Mammary epithelial cell (primary cell): ENCODE measurements at regions of chr6 and their contacts with region 1.

Region 1: DNA sequence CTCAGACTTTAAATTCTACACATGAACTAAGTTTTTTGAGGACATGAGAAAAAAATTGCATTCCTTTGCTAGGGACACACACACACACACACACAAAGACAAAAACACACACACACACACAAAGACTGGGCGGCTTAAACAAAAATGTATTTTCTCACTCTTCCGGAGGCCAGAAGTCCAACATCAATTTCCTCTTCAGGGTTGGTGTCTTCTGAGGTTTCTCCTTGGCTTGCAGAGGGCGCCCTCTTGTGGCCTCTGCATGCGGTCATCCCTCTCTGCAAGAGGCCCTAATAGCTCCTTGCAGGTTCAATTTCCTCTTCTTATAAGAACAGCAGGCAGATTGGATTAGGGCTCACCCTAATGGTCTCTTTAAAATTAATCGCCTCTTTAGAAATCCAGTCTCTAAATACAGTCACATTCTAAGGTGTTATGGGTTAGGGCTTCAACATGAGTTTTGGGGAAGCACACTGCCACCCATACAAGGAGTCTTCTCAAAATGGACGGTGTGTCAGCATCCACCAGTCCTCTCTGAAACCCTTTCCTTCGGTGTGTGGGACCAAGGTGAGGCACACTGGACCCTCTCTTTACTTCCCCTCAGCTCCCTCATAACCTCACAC is 61.4 kb downstream of the GPR6 start:
- DNase-seq: peak; percentile 74
- H3K4me3 ChIP-seq: no peak overlapping the region
- H3K27ac ChIP-seq: no peak overlapping the region
- H3K4me1 ChIP-seq: peaks cover 3% of the 10 kb centered on the region
- H3K27me3 ChIP-seq: no peaks in the 10 kb centered on the region
- CTCF ChIP-seq: peak; percentile 88 to 97

Region 2: GRCh38 chr6:109595998-109596397 is 443.5 kb before region 1 on chr6:
- CTCF ChIA-PET with region 1: interaction called, 8 read pairs
- dilution Hi-C with region 1: no loop called
- in situ Hi-C with region 1: no loop called
- intact Hi-C with region 1: loop called (anchors 1 kb)
- DNase-seq: peak; percentile 12
- H3K4me3 ChIP-seq: no peak overlapping the region
- H3K27ac ChIP-seq: no peak overlapping the region
- H3K4me1 ChIP-seq: no peaks in the 10 kb centered on the region
- H3K27me3 ChIP-seq: no peaks in the 10 kb centered on the region
- CTCF ChIP-seq: peak; percentile 30 to 74

Region 3: DNA sequence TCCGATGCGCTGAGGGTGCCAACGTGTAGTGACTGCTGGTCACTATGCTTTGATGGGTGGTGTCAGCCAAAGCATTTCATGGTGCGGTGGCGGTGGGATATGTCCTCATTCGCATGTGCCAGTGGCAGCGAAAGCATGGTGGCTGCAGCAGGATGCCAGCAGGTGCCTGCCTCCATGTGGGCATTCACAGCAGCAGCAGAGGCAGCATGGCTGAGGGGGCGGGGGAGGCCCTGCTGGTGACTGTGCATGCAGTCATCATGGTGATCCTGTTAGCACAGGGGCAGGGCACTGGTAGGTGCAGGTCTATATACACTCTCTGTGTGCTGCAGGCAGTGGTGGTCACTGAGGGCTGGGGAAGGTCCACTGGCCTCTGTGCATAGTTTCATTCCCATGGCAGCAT is 326.4 kb before region 1 on chr6:
- CTCF ChIA-PET with region 1: interaction called, 6 read pairs
- dilution Hi-C with region 1: no loop called
- in situ Hi-C with region 1: loop called in 1 of 2 experiments (anchors 10 kb)
- intact Hi-C with region 1: no loop called
- DNase-seq: peak; percentile 17
- H3K4me3 ChIP-seq: no peak overlapping the region
- H3K27ac ChIP-seq: no peak overlapping the region
- H3K4me1 ChIP-seq: peaks cover 7% of the 10 kb centered on the region
- H3K27me3 ChIP-seq: no peaks in the 10 kb centered on the region
- CTCF ChIP-seq: no peak

Region 4: GRCh38 chr6:109991201-109992101 is 48.0 kb before region 1 on chr6:
- CTCF ChIA-PET with region 1: interaction called, 11 read pairs
- dilution Hi-C with region 1: no loop called
- in situ Hi-C with region 1: no loop called
- intact Hi-C with region 1: no loop called
- DNase-seq: no peak
- H3K4me3 ChIP-seq: no peak overlapping the region
- H3K27ac ChIP-seq: no peak overlapping the region
- H3K4me1 ChIP-seq: no peaks in the 10 kb centered on the region
- H3K27me3 ChIP-seq: peaks cover 10% of the 10 kb centered on the region
- CTCF ChIP-seq: no peak

Region 5: DNA sequence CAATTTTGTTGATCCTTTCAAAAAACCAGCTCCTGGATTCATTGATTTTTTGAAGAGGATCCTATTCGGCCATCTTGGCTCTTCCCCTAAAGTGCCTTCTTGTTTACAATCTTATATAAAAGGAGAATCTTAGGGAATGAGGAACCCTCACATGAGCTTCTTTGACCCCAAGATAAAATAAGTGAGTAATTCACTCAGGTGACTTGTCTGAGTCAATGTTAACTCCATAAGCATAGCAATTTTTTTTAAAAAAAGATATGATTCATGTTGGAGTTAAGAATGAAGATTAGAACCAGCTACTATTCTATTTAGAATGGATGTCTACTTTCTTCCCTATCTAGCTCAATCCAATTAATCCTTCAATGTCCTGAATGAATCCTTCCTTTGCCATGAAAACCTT is 119.0 kb after region 1 on chr6:
- CTCF ChIA-PET with region 1: no interaction called
- dilution Hi-C with region 1: no loop called
- in situ Hi-C with region 1: no loop called
- intact Hi-C with region 1: no loop called
- DNase-seq: peak; percentile 10
- H3K4me3 ChIP-seq: no peak overlapping the region
- H3K27ac ChIP-seq: no peak overlapping the region
- H3K4me1 ChIP-seq: no peaks in the 10 kb centered on the region
- H3K27me3 ChIP-seq: no peaks in the 10 kb centered on the region
- CTCF ChIP-seq: no peak

Region 6: DNA sequence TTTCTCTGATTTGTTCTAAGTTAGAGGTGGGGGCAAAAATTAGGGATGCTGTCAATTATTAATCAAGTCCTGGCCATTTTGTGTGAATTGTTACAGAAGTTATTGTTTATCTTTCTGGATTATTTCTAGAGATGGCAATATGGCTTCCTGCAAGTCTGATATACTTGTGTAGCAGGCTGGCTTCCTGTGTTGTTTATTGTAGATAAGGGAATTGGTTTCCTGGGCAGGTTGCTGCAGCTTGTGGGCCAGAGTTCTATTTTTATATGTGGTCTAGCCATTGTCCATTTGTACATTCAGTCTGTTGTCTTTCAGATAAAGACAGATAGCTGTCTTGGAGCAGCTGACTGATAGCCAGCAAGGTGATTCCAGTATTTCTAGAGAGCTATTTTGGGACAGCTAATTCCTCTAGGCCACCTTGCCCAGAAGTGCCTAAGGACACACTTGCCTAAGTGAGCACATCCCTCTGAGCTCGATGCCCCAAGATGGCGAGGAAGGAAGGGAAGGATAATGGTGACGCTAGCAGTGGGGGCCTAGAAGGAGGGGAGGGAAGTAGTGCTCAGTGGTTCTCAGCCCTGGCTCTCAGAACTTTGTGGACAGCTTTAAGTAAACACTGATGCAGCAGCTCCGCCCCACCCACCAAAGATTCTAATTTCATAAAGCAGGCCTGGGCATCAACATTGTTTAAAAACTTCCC is 350.4 kb after region 1 on chr6:
- CTCF ChIA-PET with region 1: no interaction called
- dilution Hi-C with region 1: no loop called
- in situ Hi-C with region 1: loop called in 1 of 2 experiments (anchors 10 kb)
- intact Hi-C with region 1: loop called (anchors 1 kb)
- DNase-seq: no peak
- H3K4me3 ChIP-seq: no peak overlapping the region
- H3K27ac ChIP-seq: no peak overlapping the region
- H3K4me1 ChIP-seq: no peaks in the 10 kb centered on the region
- H3K27me3 ChIP-seq: peaks cover 2% of the 10 kb centered on the region
- CTCF ChIP-seq: no peak